Colonic mucosa (tissue), 4 donors: ENCODE measurements at regions of chr10 and their contacts with region 1.

Region 1: GRCh38 chr10:24396398-24396797 is 187.5 kb downstream of the KIAA1217 start:
- DNase-seq: no peak
- H3K4me3 ChIP-seq: no peak overlapping the region
- H3K27ac ChIP-seq: no peak overlapping the region
- H3K4me1 ChIP-seq: no peaks in the 10 kb centered on the region
- H3K27me3 ChIP-seq: no peaks in the 10 kb centered on the region
- CTCF ChIP-seq: no peak

Region 2: GRCh38 chr10:23994479-23995046 is 401.8 kb before region 1 on chr10:
- intact Hi-C with region 1: no loop called
- DNase-seq: peak; percentile 67
- H3K4me3 ChIP-seq: no peak overlapping the region
- H3K27ac ChIP-seq: no peak overlapping the region
- H3K4me1 ChIP-seq: no peaks in the 10 kb centered on the region
- H3K27me3 ChIP-seq: no peaks in the 10 kb centered on the region
- CTCF ChIP-seq: peak; percentile 88

Region 3: GRCh38 chr10:24104892-24105291 is 291.5 kb before region 1 on chr10:
- intact Hi-C with region 1: no loop called
- DNase-seq: no peak
- H3K4me3 ChIP-seq: no peak overlapping the region
- H3K27ac ChIP-seq: no peak overlapping the region
- H3K4me1 ChIP-seq: no peaks in the 10 kb centered on the region
- H3K27me3 ChIP-seq: no peaks in the 10 kb centered on the region
- CTCF ChIP-seq: no peak

Region 4: DNA sequence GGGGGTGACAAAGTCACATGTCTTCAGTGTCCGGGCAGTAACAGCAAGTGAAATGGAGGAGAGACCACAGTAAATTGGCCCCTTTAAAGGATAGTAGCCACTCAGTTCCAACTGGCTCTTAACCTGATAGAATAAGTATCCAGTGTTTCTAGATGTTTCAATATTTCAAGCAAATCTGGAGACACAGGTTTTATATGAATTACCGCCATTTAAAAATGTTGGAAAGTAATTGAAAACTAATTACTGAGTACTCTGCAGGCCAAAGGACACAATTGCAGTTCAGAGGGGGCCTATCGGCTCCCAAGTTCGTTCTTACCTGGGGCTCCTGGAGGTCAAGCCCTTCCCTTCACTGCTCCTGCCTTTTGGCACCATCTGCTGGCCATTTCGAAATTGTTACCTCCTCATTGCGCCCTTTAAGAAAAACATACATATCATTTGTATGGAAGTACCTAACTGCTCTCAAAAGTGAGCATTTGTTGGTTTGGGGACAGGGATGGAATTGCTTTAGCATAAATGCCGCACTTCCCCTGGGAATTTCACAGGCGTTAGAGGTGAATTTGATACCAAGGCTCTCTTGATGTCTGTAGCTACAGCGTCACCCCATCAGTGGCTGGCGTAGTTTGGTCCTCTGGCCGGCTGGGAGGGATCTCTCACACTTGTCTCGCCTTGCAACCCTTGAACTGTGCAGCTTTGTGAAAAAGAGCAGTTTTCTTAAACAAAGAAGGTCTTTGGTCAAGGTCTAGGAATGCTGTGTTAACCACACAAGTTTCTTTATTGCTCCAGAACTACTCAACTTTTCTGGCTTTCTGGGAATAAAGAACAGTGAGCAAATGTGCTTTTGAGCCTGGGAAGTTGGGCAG is 107.3 kb after region 1 on chr10:
- intact Hi-C with region 1: loop called (anchors 10 kb)
- DNase-seq: peak; percentile 74
- H3K4me3 ChIP-seq: no peak overlapping the region
- H3K27ac ChIP-seq: no peak overlapping the region
- H3K4me1 ChIP-seq: no peaks in the 10 kb centered on the region
- H3K27me3 ChIP-seq: no peaks in the 10 kb centered on the region
- CTCF ChIP-seq: peak; percentile 53

Region 5: DNA sequence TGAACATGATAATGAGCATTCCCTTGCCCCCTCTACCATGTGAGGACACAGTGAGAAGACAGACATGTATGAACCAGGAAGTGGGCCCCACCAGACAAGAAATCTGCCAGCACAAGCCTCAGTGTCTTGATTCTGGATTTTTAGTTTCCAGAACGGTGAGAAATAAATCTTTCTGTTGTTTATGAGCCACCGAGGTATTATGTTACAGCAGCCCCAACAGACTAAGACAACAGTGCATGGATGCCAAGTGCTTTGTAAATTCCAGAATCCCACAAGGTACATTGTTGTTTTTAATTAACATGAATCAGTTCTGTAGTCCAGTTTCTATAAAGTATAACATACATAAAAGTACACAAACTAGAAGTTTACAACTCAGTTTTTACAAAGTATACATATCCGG is 165.1 kb after region 1 on chr10:
- intact Hi-C with region 1: no loop called
- DNase-seq: no peak
- H3K4me3 ChIP-seq: no peak overlapping the region
- H3K27ac ChIP-seq: no peak overlapping the region
- H3K4me1 ChIP-seq: no peaks in the 10 kb centered on the region
- H3K27me3 ChIP-seq: no peaks in the 10 kb centered on the region
- CTCF ChIP-seq: no peak

Region 6: DNA sequence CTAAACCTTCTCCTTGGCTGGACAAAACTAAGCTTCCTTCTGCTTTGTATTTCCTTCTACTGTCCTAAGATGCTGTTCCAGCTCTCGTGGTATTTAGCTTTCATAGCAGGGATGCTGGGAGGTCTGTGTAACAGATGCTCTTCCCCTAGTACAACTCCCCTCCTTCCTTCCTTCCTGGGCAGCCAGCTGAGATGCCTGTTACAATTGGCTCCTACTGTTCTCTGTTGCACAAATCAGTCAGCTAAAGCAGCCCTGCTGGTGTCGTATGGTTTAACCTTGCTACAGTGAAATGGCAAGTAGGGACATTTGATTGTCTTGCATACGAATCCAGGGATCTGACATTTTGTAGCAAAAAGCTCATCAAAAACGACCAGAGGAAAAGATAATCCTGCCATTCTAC is 183.5 kb after region 1 on chr10:
- intact Hi-C with region 1: no loop called
- DNase-seq: no peak
- H3K4me3 ChIP-seq: no peak overlapping the region
- H3K27ac ChIP-seq: no peak overlapping the region
- H3K4me1 ChIP-seq: no peaks in the 10 kb centered on the region
- H3K27me3 ChIP-seq: no peaks in the 10 kb centered on the region
- CTCF ChIP-seq: no peak